Activated CD4-positive, alpha-beta T cell treated with anti-CD3 and anti-CD28 coated beads for 36 hours (primary cell): ENCODE measurements at regions of chr2 and their contacts with region 1.

Region 1: DNA sequence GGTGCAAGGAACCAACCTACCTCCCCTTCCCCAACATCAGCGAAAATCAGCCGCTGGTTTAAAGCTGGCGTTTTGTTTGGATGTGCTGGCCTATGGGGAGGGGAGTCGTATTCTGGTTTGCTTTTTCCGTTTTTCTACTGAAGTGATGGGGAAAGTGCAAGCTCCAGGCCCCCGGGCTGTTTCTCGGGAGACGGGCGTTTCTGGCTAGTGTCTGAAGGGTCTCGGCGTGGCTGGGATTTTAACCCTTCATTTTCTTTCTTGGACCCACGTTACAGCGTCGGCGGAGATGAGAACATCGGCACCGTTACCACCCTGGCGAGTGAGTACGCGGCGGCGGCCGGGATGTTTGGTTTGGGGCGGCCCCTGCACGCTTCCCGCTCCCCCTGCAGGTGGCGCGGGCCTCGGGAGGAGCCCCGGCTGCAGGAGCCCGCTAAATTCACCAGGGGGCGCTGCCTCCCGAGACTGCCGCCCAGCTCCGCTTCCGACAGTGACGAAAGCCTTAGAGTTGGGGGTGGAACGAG is 70.7 kb downstream of the PLB1 start:
- DNase-seq: peak; percentile 96
- ATAC-seq: peak; percentile 99
- H3K4me3 Mint-ChIP-seq: peak overlapping the region; percentile 81
- H3K27ac Mint-ChIP-seq: peak overlapping the region; percentile 87
- H3K4me1 Mint-ChIP-seq: peaks cover 18% of the 10 kb centered on the region
- H3K27me3 Mint-ChIP-seq: peaks cover 2% of the 10 kb centered on the region

Region 2: GRCh38 chr2:28780496-28780895 is 213.9 kb after region 1 on chr2:
- CTCF ChIA-PET with region 1: interaction called, 11 read pairs
- POLR2A ChIA-PET with region 1: no interaction called
- intact Hi-C with region 1: no loop called
- DNase-seq: no peak
- ATAC-seq: no peak
- H3K4me3 Mint-ChIP-seq: no peak overlapping the region
- H3K27ac Mint-ChIP-seq: peak overlapping the region; percentile 34
- H3K4me1 Mint-ChIP-seq: peaks cover 20% of the 10 kb centered on the region
- H3K27me3 Mint-ChIP-seq: no peaks in the 10 kb centered on the region

Region 3: DNA sequence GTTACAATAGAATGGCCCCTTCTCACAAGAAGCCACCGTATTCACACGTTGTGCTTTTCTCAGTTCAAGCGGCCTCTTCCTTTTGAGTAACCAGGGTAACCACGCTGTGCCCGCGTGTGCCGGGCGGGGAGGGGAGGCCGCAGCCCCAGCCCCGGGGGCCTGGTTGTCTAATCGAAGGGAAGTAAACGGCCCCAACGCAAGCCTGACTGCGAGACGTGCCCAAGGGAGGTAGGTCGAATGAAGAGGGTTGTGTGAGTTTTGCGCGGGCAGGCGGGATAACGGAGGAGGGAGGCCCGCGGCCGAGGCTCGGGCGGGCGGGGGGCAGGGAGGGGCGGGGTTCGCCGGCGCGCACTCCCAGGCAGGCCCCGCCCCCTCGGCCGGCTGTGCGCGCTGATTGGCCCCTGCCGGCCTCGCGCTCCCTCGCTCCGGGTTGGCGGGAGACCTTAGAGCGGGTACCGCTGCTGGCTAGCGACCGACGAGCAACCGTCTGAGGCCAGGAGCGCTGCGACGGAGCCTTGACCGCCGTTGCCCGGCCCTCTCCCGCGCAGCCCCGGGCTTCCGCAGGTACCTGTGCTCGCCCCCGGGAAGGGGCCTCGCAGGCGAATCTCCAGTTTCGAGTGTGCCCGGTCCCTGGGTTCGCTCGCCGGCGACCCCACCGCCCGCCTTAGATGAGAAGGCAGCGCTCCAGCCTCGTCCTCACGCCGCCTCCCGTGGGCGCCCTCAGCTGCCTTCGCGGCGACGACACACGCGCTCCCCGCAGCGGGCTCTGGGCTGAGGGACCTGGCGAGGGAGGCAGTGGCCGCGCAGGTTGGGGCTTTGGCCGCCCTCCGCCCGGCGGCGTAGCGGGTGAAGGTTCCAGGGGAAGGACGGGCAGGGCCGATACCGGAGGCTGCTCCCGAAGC is 244.1 kb after region 1 on chr2 and contains the start of gene SPDYA:
- CTCF ChIA-PET with region 1: interaction called, 8 read pairs
- POLR2A ChIA-PET with region 1: interaction called, 4 read pairs
- intact Hi-C with region 1: loop called (anchors 1 to 2 kb)
- DNase-seq: peak; percentile 90
- ATAC-seq: peak; percentile 95
- H3K4me3 Mint-ChIP-seq: peak within 1 kb of the TSS; percentile 59
- H3K27ac Mint-ChIP-seq: no peak within 1 kb of the TSS
- H3K4me1 Mint-ChIP-seq: peaks cover 14% of the 10 kb centered on the region
- H3K27me3 Mint-ChIP-seq: no peaks in the 10 kb centered on the region
- total RNA-seq, gene SPDYA: 0.93 to 1.2 TPM

Region 4: DNA sequence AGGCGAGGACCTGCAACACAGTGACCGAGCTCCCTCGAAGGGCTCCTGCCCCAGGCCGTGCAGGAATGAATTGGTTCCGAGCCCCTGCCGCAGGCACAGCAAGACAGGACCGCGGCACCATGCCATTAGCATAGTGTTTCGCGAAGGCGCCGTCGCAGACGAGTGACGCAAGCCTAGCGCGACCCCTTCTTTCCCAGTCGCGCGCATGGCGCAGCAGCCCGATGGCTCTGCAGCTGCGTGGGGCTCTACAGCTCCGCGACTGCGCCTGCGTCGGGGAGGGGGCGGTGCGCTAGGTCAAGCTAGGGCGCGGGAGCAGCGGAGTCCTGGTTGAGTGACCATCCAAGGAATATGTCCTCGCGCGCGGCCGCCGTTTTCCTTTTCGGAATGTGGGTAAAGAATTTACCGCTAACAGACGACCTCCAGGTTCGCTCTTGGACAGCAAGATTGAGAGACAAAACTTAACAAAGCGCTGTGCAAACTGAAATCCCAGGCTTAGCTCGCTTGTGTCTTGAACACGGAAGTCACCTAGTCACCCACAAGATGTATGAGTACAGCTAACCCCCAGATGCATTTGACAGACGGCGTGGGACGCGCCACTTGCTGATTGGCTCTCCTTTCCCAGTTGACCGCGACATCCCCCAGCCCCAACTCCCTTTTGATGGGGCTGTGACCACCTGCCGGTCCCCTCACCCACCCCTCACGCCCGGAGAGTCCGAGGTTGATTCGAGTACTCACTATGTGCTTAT is 303.7 kb after region 1 on chr2 and contains the start of gene TRMT61B:
- CTCF ChIA-PET with region 1: interaction called, 3 read pairs
- POLR2A ChIA-PET with region 1: no interaction called
- intact Hi-C with region 1: loop called in 1 of 2 experiments (anchors 1 kb)
- DNase-seq: peak; percentile 98
- ATAC-seq: peak; percentile 99
- H3K4me3 Mint-ChIP-seq: peak within 1 kb of the TSS; percentile 94
- H3K27ac Mint-ChIP-seq: peak within 1 kb of the TSS; percentile 97
- H3K4me1 Mint-ChIP-seq: peaks cover 25% of the 10 kb centered on the region
- H3K27me3 Mint-ChIP-seq: no peaks in the 10 kb centered on the region
- total RNA-seq, gene TRMT61B: 22.0 to 22.2 TPM

Region 5: GRCh38 chr2:28952816-28953211 is 386.2 kb after region 1 on chr2:
- CTCF ChIA-PET with region 1: interaction called, 3 read pairs
- POLR2A ChIA-PET with region 1: no interaction called
- intact Hi-C with region 1: loop called in 1 of 2 experiments (anchors 5 kb)
- DNase-seq: no peak
- ATAC-seq: peak; percentile 67
- H3K4me3 Mint-ChIP-seq: no peak overlapping the region
- H3K27ac Mint-ChIP-seq: no peak overlapping the region
- H3K4me1 Mint-ChIP-seq: peaks cover 3% of the 10 kb centered on the region
- H3K27me3 Mint-ChIP-seq: no peaks in the 10 kb centered on the region

Region 6: GRCh38 chr2:29196792-29197788 is 630.5 kb after region 1 on chr2:
- CTCF ChIA-PET with region 1: no interaction called
- POLR2A ChIA-PET with region 1: no interaction called
- intact Hi-C with region 1: loop called in 1 of 2 experiments (anchors 2 kb)
- DNase-seq: peak; percentile 89
- ATAC-seq: peak; percentile 98
- H3K4me3 Mint-ChIP-seq: no peak overlapping the region
- H3K27ac Mint-ChIP-seq: no peak overlapping the region
- H3K4me1 Mint-ChIP-seq: peaks cover 3% of the 10 kb centered on the region
- H3K27me3 Mint-ChIP-seq: no peaks in the 10 kb centered on the region